ENCODE measurements at regions of chr2 and their contacts with region 1.

Region 1: GRCh38 chr2:108637304-108637669 is 82.0 kb upstream of the RANBP2 start:
- DNase-seq: no peak
- ATAC-seq: no peak
- H3K4me3 Mint-ChIP-seq: no peak overlapping the region
- H3K27ac Mint-ChIP-seq: no peak overlapping the region
- H3K4me1 Mint-ChIP-seq: peaks cover 31% of the 10 kb centered on the region
- H3K27me3 Mint-ChIP-seq: no peaks in the 10 kb centered on the region
- CTCF ChIP-seq: no peak

Region 2: GRCh38 chr2:108351889-108352288 is 285.4 kb before region 1 on chr2:
- CTCF ChIA-PET with region 1: no interaction called
- POLR2A ChIA-PET with region 1: no interaction called
- intact Hi-C with region 1: loop called (anchors 1 kb)
- DNase-seq: no peak
- ATAC-seq: no peak
- H3K4me3 Mint-ChIP-seq: no peak overlapping the region
- H3K27ac Mint-ChIP-seq: no peak overlapping the region
- H3K4me1 Mint-ChIP-seq: no peaks in the 10 kb centered on the region
- H3K27me3 Mint-ChIP-seq: peaks cover 9% of the 10 kb centered on the region
- CTCF ChIP-seq: no peak

Region 3: GRCh38 chr2:108594132-108594981 is 42.9 kb before region 1 on chr2:
- CTCF ChIA-PET with region 1: interaction called, 29 read pairs
- POLR2A ChIA-PET with region 1: no interaction called
- intact Hi-C with region 1: loop called (anchors 5 kb)
- DNase-seq: no peak
- ATAC-seq: peak; percentile 75
- H3K4me3 Mint-ChIP-seq: peak overlapping the region; percentile 64
- H3K27ac Mint-ChIP-seq: peak overlapping the region; percentile 83
- H3K4me1 Mint-ChIP-seq: peaks cover 78% of the 10 kb centered on the region
- H3K27me3 Mint-ChIP-seq: no peaks in the 10 kb centered on the region
- CTCF ChIP-seq: no peak

Region 4: DNA sequence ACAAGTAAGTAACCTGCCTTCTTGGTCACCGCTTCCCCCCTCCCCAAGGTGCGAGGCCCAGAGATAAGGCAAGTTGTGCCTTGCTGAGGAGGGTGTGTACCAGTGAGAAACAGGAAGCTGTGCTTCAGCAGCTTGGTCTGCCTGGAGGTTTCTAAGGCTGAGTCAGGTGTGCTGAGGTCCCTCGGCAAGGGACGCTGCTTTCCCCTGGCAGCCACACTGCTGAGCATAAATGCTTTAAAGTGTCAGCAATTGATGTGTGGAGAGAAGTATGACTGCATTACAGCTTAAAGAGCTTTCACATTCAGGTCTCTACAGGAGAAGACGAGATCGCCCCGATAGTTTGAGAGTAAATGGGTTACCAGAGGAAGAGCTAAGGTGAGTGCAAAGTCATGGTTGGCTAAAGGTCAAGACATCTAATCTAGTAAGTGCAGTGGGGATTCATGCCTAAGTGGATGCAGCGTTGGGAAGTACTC is 16.2 kb before region 1 on chr2:
- CTCF ChIA-PET with region 1: interaction called, 29 read pairs
- POLR2A ChIA-PET with region 1: interaction called, 8 read pairs
- intact Hi-C with region 1: loop called (anchors 2 kb)
- DNase-seq: no peak
- ATAC-seq: peak; percentile 98
- H3K4me3 Mint-ChIP-seq: peak overlapping the region; percentile 69
- H3K27ac Mint-ChIP-seq: peak overlapping the region; percentile 82
- H3K4me1 Mint-ChIP-seq: peaks cover 54% of the 10 kb centered on the region
- H3K27me3 Mint-ChIP-seq: no peaks in the 10 kb centered on the region
- CTCF ChIP-seq: no peak

Measured in activated B cell treated with CpG ODN at 0.5 μM for 24 hours (primary cell).